ENCODE measurements at regions of chr20 and their contacts with region 1.

Region 1: DNA sequence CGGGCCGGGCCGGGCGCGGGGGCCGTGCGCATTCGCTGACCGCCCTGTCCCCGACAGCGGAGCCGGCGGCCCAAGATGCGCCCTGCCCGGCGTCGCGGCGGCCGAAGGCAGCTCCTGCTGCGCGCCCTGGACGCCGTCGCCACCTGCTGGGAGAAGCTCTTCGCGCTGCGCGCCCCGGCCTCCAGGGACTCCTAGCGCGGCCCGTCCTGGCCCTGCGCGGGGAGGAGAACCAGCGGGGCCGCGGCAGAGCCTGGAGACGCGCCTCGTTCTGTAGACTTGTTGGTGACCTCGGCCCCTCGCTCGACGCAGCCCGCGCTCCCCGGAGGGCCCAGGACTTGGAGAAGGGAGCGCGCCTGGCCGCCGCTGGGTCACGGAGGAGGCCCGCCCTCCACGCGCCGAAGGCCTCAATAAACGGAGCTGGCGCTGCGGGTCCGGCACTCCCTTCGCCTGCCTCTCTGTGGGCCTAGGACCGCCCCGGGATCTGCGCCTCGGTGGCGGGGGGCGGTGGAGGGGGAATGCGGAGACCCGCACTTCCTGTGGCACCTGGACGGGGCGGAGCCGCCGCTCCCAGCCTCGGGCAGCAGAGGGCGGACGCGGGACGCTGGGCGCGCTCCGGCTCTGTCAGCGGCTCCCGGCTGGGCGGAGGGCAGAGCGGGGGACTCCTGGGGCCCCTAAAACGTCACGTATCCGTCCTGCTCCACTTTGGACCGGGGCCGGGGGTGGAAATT is 2.7 kb downstream of the C20orf204 start:
- DNase-seq: peak; percentile 77 to 92
- ATAC-seq: peak; percentile 88
- H3K4me3 ChIP-seq: no peak overlapping the region
- H3K27ac ChIP-seq: no peak overlapping the region
- H3K4me1 ChIP-seq: no peaks in the 10 kb centered on the region
- H3K27me3 ChIP-seq: no peaks in the 10 kb centered on the region

Region 2: DNA sequence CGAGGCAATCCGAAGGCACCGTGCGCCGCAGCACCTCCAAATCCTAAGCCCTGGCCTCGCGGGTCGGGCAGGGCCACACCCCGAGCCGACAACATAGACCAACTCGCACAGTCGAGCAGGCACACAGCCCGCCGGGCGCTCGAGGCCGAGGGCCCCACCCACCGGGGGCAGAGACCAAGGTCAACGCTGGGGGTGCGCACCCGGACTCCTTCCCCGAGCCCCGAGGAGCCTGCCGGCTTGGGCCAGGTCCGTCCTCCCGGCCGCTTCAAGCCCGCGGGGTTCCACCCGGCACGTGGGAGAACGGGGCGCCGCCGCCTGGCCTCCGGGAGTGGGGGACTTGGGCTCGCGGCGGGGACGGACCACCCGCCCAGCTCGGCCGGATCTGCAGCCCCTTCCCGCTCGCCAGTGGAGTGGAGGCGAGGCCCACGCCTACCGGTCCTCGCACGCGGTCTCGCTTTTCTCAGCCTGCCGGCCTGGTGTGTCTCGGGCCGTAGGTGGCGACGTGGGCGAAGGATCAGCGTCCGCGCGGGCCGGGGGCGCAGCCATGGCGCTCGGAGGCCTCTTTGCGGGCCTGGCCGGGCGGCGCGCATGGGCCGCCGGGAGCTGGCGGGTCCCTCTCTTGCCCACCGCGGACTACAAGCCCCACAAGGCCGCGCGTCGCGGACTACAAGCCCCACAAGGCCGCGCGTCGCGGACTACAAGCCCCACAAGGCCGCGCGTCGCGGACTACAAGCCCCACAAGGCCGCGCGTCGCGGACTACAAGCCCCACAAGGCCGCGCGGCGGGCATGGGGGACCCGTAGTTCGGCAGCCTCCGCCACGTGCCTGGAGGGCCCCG is 82.7 kb before region 1 on chr20 and contains the start of gene UCKL1:
- intact Hi-C with region 1: no loop called
- DNase-seq: peak; percentile 97
- ATAC-seq: peak; percentile 92
- H3K4me3 ChIP-seq: peak within 1 kb of the TSS; percentile 44 to 65
- H3K27ac ChIP-seq: peak within 1 kb of the TSS in 1 of 2 donors; percentile 15
- H3K4me1 ChIP-seq: no peaks in the 10 kb centered on the region
- H3K27me3 ChIP-seq: no peaks in the 10 kb centered on the region
- total RNA-seq, gene UCKL1: 27.2 to 39.5 TPM

Region 3: DNA sequence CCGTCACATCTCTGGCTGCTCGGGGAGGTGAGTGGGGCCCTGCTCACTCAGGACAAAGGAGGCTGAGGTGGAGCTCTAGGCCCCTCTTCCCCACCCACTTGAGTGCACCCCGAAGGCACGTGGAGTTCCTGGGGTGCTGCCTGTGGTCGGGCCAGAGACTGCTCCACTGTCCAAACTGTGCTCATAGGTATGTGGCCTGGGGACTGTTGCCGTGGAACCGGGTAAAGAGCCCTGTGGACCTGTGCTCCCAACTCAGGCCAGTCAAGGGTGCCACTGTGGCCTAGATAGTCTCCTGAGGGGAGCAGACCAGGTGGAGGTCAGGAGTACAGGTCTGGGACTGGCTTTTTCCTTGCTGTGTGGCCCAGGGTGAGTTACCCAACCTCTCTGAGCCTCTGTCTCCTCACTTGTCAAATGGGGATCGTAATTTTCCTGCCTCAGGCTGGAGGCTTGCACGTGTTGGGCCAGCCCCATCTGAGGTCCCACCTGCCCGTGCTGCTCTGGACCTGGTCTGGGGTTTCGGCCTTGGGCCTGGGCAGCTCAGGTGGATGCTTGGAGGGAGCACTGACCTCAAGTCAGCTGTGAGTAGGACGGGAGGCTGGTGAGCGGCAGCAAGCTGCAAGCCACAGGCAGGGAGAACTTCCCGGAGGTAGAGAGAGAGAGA is 81.1 kb after region 1 on chr20:
- intact Hi-C with region 1: loop called (anchors 1 to 2 kb)
- DNase-seq: peak; percentile 36 to 55
- ATAC-seq: peak; percentile 26
- H3K4me3 ChIP-seq: no peak overlapping the region
- H3K27ac ChIP-seq: no peak overlapping the region
- H3K4me1 ChIP-seq: no peaks in the 10 kb centered on the region
- H3K27me3 ChIP-seq: no peaks in the 10 kb centered on the region

Measured in aorta (tissue), 5 donors.